OCI-LY7 (cell line): ENCODE measurements at regions of chr18 and their contacts with region 1.

Region 1: GRCh38 chr18:3665780-3666525 is 216.0 kb downstream of the TGIF1 start:
- DNase-seq: peak; percentile 91
- H3K4me3 ChIP-seq: peak overlapping the region; percentile 58
- H3K27ac ChIP-seq: peak overlapping the region; percentile 78
- H3K4me1 ChIP-seq: peaks cover 52% of the 10 kb centered on the region
- CTCF ChIP-seq: peak; percentile 99

Region 2: GRCh38 chr18:3297025-3297984 is 368.6 kb before region 1 on chr18:
- CTCF ChIA-PET with region 1: interaction called, 3 read pairs
- POLR2A ChIA-PET with region 1: interaction called, 4 read pairs
- intact Hi-C with region 1: loop called (anchors 1 kb)
- DNase-seq: peak; percentile 97
- H3K4me3 ChIP-seq: peak overlapping the region; percentile 85
- H3K27ac ChIP-seq: peak overlapping the region; percentile 57
- H3K4me1 ChIP-seq: peaks cover 10% of the 10 kb centered on the region
- CTCF ChIP-seq: peak; percentile 98

Region 3: DNA sequence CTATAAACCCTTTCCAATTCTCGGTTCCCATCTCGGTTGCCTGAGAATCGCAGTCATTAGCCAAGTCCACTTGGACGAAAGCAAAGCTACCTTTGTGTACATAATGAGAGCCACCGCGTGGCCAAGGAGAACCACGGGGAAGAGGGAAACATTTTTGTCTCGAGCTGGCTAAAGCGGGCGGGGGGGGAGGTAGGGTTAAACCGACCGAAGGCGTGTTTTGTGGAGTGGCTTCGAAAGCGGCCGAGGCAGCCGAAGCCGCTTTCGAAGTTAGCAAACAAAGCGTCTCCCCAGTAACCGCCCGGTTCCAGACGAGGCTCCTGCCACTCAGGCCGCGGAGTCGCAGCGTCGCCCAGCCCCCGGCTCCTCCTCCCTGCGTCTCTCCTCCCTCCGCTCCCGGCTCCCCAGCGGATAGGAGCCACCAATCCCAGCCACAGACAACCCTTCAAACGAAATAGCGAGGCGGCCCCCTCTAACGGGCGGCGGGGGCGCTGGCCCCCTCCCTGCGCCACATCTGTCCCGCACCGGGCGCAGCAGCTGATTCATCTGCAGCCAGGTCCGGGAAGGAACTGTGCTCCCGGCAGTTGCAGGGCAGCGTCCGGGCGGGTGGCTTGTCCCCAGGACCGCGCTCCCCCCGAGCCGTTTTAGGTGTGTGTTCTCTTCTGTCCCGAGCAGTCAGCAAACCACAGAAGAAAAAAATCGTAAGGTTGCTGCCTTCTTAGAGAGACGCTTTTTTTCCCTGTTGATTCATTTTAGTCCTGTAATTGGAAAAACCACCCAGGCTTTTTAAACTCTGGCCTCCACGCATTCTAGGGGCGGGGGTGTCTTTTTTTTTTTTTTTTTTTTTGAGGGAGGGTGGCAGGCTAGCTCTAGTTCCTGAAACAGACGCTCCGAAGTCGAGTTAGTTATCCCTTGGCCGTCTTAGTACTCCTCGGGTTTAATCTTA is 217.8 kb before region 1 on chr18:
- CTCF ChIA-PET with region 1: interaction called, 5 read pairs
- POLR2A ChIA-PET with region 1: interaction called, 3 read pairs
- intact Hi-C with region 1: loop called (anchors 2 kb)
- DNase-seq: peak; percentile 88
- H3K4me3 ChIP-seq: peak overlapping the region; percentile 88
- H3K27ac ChIP-seq: peak overlapping the region; percentile 96
- H3K4me1 ChIP-seq: peaks cover 22% of the 10 kb centered on the region
- CTCF ChIP-seq: no peak

Region 4: GRCh38 chr18:3604498-3605408 is 61.2 kb before region 1 on chr18:
- CTCF ChIA-PET with region 1: interaction called, 5 read pairs
- POLR2A ChIA-PET with region 1: interaction called, 11 read pairs
- intact Hi-C with region 1: no loop called
- DNase-seq: peak; percentile 75
- H3K4me3 ChIP-seq: peak overlapping the region; percentile 60
- H3K27ac ChIP-seq: peak overlapping the region; percentile 77
- H3K4me1 ChIP-seq: peaks cover 46% of the 10 kb centered on the region
- CTCF ChIP-seq: no peak

Region 5: DNA sequence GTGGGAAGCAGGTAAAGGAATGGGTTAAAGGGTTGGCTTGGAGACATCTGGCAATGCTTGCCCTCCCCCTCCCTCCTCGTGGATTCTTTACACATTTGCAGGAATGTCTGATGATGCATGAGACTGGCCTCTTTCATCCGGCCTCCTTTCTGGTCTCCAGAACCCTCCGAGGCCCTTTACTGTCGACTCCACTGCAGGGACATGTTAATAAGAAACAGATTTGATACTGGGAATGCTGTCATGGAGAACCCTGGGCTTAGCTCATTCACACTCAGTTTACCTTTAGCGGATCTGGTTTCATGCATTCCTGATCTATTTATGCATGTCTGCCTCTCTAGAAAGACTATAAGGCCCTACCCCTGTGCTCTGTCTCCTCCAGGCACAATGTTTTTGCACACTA is 22.7 kb after region 1 on chr18:
- CTCF ChIA-PET with region 1: no interaction called
- POLR2A ChIA-PET with region 1: no interaction called
- intact Hi-C with region 1: no loop called
- DNase-seq: no peak
- H3K4me3 ChIP-seq: no peak overlapping the region
- H3K27ac ChIP-seq: no peak overlapping the region
- H3K4me1 ChIP-seq: peaks cover 8% of the 10 kb centered on the region
- CTCF ChIP-seq: no peak